ENCODE measurements at regions of chr15 and their contacts with region 1.

Region 1: DNA sequence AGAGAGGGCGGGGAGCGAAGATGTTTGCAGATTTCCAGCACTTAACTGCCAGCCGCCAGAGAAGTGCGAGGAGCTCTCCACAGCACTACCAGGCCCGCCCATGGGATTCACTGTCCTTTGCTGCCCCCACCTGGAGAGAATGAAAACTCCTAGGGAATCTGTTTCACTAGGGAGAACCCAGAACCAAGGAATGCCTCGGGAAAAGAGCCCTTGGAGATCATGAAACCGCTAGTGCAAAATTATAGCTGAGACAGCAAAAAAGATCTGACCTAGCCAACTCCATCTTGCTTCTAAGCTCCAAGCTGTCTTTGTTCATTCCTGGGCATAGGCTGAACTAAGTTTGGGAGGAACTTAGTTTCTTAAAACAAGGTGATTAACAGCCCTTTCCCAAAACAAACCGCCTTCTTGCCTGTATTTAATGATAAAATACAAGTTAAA is 82.6 kb upstream of the GCNT3 start:
- DNase-seq: no peak
- ATAC-seq: peak; percentile 91
- H3K4me3 ChIP-seq: no peak overlapping the region
- H3K27ac ChIP-seq: no peak overlapping the region
- H3K4me1 ChIP-seq: no peaks in the 10 kb centered on the region; the same call in none of the 2 replicates
- H3K27me3 ChIP-seq: no peaks in the 10 kb centered on the region
- CTCF ChIP-seq: peak; percentile 73 to 89 (median 80)
- EP300 ChIP-seq: no peak
- POLR2A ChIP-seq: no peak
- RAD21 ChIP-seq: peak; percentile 96

Region 2: DNA sequence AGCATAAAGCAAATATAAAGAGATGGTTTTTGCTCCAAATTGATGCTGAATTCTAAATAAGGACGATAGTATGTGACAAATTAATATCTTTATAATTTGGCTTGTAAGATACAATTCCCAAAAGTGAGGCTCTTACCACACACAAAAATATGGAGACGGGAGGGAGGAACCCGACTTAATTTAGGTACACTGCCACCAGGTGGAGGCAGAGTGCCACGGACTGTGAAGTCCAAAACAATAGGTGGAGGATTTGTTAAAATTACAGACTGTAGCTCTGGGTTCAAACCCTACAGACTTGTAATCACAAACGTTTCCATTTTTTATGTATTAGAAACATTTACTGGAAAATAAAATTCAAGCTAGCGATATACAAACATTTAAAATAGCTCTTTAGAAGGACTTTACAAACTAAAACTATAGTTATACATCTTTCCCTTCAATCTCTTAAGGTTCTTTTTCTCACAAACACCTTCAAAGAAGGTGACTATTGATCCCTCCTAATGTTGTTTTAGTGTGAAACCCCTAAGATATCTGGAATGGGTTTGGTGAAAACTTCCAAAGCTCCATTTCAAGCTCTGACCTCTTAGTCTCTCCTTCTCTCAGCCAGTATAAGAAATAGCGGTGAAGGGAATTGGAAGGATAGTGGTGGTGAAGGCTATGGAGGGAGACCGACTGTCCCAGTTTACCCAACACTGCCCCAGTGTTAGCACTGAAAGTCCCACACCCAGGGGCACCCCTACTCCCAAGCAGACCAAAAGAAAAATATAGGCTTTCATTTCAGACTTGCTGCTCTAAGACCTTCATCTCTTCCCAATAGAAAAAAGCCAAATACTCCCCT is 1301.1 kb before region 1 on chr15:
- CTCF ChIA-PET with region 1: interaction called, 10 read pairs
- POLR2A ChIA-PET with region 1: no interaction called
- RAD21 ChIA-PET with region 1: interaction called, 5 read pairs
- SMC1A ChIA-PET with region 1: interaction called, 5 read pairs
- in situ Hi-C with region 1: loop called (anchors 10 kb)
- intact Hi-C with region 1: loop called (anchors 5 kb)
- DNase-seq: peak; percentile 37
- ATAC-seq: peak; percentile 85
- H3K4me3 ChIP-seq: no peak overlapping the region
- H3K27ac ChIP-seq: no peak overlapping the region
- H3K4me1 ChIP-seq: no peaks in the 10 kb centered on the region
- H3K27me3 ChIP-seq: no peaks in the 10 kb centered on the region; a peak in 1 of 4 replicates
- CTCF ChIP-seq: peak; percentile 69 to 94 (median 85); a peak in 5 of 6 replicates
- EP300 ChIP-seq: no peak
- POLR2A ChIP-seq: no peak
- RAD21 ChIP-seq: peak; percentile 97

Region 3: DNA sequence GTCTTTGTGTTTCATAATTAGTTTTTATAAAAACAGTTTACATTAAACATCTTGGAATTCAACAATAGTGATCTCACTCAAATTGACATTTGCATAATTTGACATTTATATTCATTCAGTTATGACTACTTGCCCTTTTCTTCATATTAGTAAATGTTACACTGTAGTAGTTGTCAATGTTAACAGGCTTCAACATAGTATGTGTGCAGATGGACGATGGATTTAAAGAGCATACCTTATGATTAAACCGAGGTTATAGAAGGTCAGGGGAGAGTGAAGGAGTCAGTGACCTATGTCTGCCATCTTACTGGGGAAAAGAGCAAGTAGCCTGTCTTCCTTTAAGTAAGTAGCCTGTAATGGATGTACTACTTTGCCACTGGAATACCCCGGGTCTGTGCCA is 432.6 kb before region 1 on chr15:
- CTCF ChIA-PET with region 1: no interaction called
- POLR2A ChIA-PET with region 1: no interaction called
- RAD21 ChIA-PET with region 1: no interaction called
- SMC1A ChIA-PET with region 1: no interaction called
- in situ Hi-C with region 1: no loop called
- intact Hi-C with region 1: no loop called
- DNase-seq: no peak
- ATAC-seq: no peak
- H3K4me3 ChIP-seq: no peak overlapping the region
- H3K27ac ChIP-seq: no peak overlapping the region
- H3K4me1 ChIP-seq: no peaks in the 10 kb centered on the region
- H3K27me3 ChIP-seq: no peaks in the 10 kb centered on the region
- CTCF ChIP-seq: no peak
- EP300 ChIP-seq: no peak
- POLR2A ChIP-seq: no peak
- RAD21 ChIP-seq: no peak

Region 4: GRCh38 chr15:59410391-59410896 is 118.5 kb before region 1 on chr15:
- CTCF ChIA-PET with region 1: interaction called, 10 read pairs
- POLR2A ChIA-PET with region 1: no interaction called
- RAD21 ChIA-PET with region 1: no interaction called
- SMC1A ChIA-PET with region 1: interaction called, 8 read pairs
- in situ Hi-C with region 1: no loop called
- intact Hi-C with region 1: no loop called
- DNase-seq: peak; percentile 64
- ATAC-seq: peak; percentile 4
- H3K4me3 ChIP-seq: peak overlapping the region; percentile 38
- H3K27ac ChIP-seq: peak overlapping the region; percentile 52
- H3K4me1 ChIP-seq: peaks cover 66% of the 10 kb centered on the region
- H3K27me3 ChIP-seq: no peaks in the 10 kb centered on the region
- CTCF ChIP-seq: no peak
- EP300 ChIP-seq: no peak
- POLR2A ChIP-seq: no peak
- RAD21 ChIP-seq: no peak

Region 5: GRCh38 chr15:59543721-59544547 is 14.9 kb after region 1 on chr15:
- CTCF ChIA-PET with region 1: interaction called, 20 read pairs
- POLR2A ChIA-PET with region 1: no interaction called
- RAD21 ChIA-PET with region 1: interaction called, 3 read pairs
- SMC1A ChIA-PET with region 1: interaction called, 6 read pairs
- in situ Hi-C with region 1: no loop called
- intact Hi-C with region 1: no loop called
- DNase-seq: peak; percentile 78
- ATAC-seq: peak; percentile 93
- H3K4me3 ChIP-seq: peak overlapping the region; percentile 22; the same call in 1 of the 2 replicates
- H3K27ac ChIP-seq: peak overlapping the region; percentile 73
- H3K4me1 ChIP-seq: peaks cover 24% of the 10 kb centered on the region
- H3K27me3 ChIP-seq: no peaks in the 10 kb centered on the region
- CTCF ChIP-seq: no peak
- EP300 ChIP-seq: no peak
- POLR2A ChIP-seq: no peak
- RAD21 ChIP-seq: no peak

Region 6: DNA sequence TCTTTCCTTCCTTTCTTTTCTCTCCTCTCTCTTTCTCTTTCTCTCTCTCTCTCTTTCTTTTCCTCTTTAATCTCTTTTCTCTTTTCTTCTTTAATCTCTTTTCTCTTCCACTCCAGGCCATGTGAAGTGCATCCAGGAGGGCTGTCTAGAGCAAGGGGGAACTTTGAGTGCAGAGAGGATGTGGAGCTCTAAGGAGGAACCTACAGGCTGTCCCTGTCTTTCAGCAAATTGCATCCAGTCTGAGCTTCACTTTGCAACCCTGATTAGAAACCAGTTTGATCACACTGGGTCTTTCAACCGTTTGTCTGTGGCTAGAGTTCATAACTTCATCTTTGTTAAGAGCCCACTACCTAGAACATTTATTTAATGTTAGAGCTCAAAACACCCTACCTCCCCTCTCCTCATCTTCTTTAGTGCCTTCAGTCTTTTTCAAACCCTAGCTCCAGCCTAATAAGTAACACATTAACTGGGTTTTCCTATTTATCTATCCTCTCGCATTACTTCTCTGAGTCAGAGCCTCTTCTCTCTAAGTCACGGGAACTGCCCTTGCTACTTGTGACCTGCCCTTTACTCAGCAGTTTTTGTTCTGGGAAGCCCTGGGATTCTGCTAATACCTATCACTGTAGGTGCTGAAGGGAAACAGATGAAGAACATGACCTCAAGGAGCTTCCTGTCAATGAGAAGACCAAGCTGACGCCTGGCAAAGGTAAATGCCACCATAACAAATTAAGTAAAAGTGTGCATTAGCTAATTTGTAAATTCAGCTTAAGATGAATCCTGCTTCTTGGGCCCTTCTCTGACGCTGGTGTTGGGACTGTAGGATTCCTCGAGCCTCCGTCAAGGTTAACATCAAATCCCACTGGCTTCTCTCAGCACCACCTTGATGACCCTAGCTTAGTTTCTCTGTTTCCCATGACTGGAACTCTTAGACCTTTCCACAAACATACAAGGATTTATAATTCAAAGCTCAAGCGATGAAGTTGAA is 82.6 kb after region 1 on chr15 and contains the start of gene GCNT3:
- CTCF ChIA-PET with region 1: interaction called, 22 read pairs
- POLR2A ChIA-PET with region 1: no interaction called
- RAD21 ChIA-PET with region 1: interaction called, 7 read pairs
- SMC1A ChIA-PET with region 1: interaction called, 6 read pairs
- in situ Hi-C with region 1: no loop called
- intact Hi-C with region 1: no loop called
- DNase-seq: no peak
- ATAC-seq: no peak
- H3K4me3 ChIP-seq: no peak within 1 kb of the TSS
- H3K27ac ChIP-seq: no peak within 1 kb of the TSS
- H3K4me1 ChIP-seq: peaks cover 5% of the 10 kb centered on the region; the same call in 1 of the 2 replicates
- H3K27me3 ChIP-seq: no peaks in the 10 kb centered on the region
- CTCF ChIP-seq: no peak
- EP300 ChIP-seq: no peak
- POLR2A ChIP-seq: no peak
- RAD21 ChIP-seq: no peak
- polyA plus RNA-seq, gene GCNT3: 0.38 TPM in 1 of 2 experiments, not detected in the other

Region 7: GRCh38 chr15:59656897-59657634 is 128.1 kb after region 1 on chr15 and contains the start of gene GTF2A2:
- CTCF ChIA-PET with region 1: interaction called, 15 read pairs
- POLR2A ChIA-PET with region 1: no interaction called
- RAD21 ChIA-PET with region 1: interaction called, 4 read pairs
- SMC1A ChIA-PET with region 1: interaction called, 6 read pairs
- in situ Hi-C with region 1: no loop called
- intact Hi-C with region 1: no loop called
- DNase-seq: peak; percentile 71
- ATAC-seq: peak; percentile 99
- H3K4me3 ChIP-seq: peak within 1 kb of the TSS; percentile 80
- H3K27ac ChIP-seq: peak within 1 kb of the TSS; percentile 77
- H3K4me1 ChIP-seq: 0 out of 2 replicates have a peak, but pooled peaks cover 4% of the 10 kb centered on the region
- H3K27me3 ChIP-seq: no peaks in the 10 kb centered on the region
- CTCF ChIP-seq: no peak
- EP300 ChIP-seq: peak in 1 of 2 experiments; percentile 19; a peak in 1 of 4 replicates
- POLR2A ChIP-seq: peak; percentile 91
- RAD21 ChIP-seq: no peak
- polyA plus RNA-seq, gene GTF2A2: 479 to 565 TPM

Measured in GM12878 (cell line).